ENCODE measurements at regions of chrX and their contacts with region 1.

Region 1: GRCh38 chrX:56248492-56248891 is 16.3 kb downstream of the KLF8 start:
- DNase-seq: peak in 1 of 2 experiments; percentile 72
- H3K4me3 ChIP-seq: no peak overlapping the region
- H3K27ac ChIP-seq: no peak overlapping the region
- H3K4me1 ChIP-seq: no peaks in the 10 kb centered on the region
- H3K27me3 ChIP-seq: no peaks in the 10 kb centered on the region
- CTCF ChIP-seq: peak; percentile 74

Region 2: GRCh38 chrX:55907968-55908607 is 340.4 kb before region 1 on chrX:
- CTCF ChIA-PET with region 1: no interaction called
- POLR2A ChIA-PET with region 1: no interaction called
- intact Hi-C with region 1: loop called (anchors 5 kb)
- DNase-seq: peak; percentile 72 to 78
- H3K4me3 ChIP-seq: peak overlapping the region; percentile 84
- H3K27ac ChIP-seq: peak overlapping the region; percentile 69
- H3K4me1 ChIP-seq: peaks cover 14% of the 10 kb centered on the region
- H3K27me3 ChIP-seq: no peaks in the 10 kb centered on the region
- CTCF ChIP-seq: peak; percentile 69

Region 3: DNA sequence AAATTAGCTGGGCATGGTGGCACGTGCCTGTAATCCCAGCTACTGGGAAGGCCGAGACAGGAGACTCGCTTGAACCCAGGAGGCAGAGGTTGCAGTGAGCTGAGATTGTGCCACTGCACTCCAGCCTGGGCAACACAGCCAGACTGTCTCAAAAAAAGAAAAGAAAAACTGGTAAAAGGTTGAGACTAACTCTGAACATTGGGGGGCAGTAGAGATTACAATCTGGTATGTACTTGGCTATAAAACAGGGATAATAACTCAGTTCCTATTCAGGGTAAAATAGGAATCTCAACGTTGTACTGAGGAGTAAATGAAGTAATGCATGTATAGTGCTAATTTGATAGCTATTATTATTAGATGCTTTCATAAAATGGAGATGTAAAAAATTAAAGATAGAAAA is 28.8 kb before region 1 on chrX:
- CTCF ChIA-PET with region 1: interaction called, 3 read pairs
- POLR2A ChIA-PET with region 1: no interaction called
- intact Hi-C with region 1: loop called (anchors 2 kb)
- DNase-seq: no peak
- H3K4me3 ChIP-seq: no peak overlapping the region
- H3K27ac ChIP-seq: no peak overlapping the region
- H3K4me1 ChIP-seq: no peaks in the 10 kb centered on the region
- H3K27me3 ChIP-seq: no peaks in the 10 kb centered on the region
- CTCF ChIP-seq: peak; percentile 47; the same call in 1 of the 2 replicates

Region 4: DNA sequence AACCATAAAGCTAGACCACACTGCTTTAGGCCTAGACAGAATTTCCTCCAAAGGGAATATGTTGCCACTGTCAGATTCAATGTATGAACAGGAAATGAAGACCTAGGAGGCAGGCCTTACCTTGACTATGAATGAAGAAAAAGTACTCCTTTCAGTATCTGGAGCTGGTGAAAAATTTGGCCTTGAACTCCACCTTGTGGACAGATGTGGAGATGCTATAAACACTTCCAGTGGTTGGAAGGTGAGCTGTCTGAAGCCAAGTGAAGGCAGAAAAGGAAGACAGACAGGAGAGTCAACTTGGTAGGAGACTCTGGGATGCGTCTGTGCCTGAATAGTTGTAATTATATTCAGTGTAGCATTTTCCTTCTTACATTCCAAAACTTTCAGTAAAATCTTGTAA is 729.7 kb after region 1 on chrX:
- CTCF ChIA-PET with region 1: interaction called, 3 read pairs
- POLR2A ChIA-PET with region 1: no interaction called
- intact Hi-C with region 1: loop called (anchors 1 kb)
- DNase-seq: peak in 1 of 2 experiments; percentile 62
- H3K4me3 ChIP-seq: no peak overlapping the region
- H3K27ac ChIP-seq: no peak overlapping the region
- H3K4me1 ChIP-seq: peaks cover 9% of the 10 kb centered on the region; the same call in 1 of the 2 replicates
- H3K27me3 ChIP-seq: no peaks in the 10 kb centered on the region
- CTCF ChIP-seq: peak; percentile 72

Region 5: DNA sequence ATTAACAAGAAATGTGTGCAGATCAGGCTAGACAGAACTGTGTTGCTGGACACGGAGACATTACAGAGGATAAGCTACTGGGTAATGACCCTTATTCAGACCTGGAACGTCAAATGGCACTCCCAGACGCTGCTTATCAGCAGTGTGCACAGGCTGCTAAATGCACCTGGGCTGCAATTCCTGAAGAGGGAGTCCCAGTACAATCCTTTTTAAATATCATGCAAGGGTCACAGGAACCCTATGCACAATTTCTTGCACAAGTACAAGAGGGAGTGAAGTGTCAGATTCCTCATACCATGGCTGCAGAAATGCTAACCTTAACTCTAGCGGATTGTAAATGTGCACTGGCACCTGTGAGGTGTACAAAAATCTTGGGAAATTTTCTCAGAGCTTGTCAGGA is 855.9 kb after region 1 on chrX:
- CTCF ChIA-PET with region 1: no interaction called
- POLR2A ChIA-PET with region 1: no interaction called
- intact Hi-C with region 1: loop called (anchors 10 kb)
- DNase-seq: no peak
- H3K4me3 ChIP-seq: no peak overlapping the region
- H3K27ac ChIP-seq: no peak overlapping the region
- H3K4me1 ChIP-seq: no peaks in the 10 kb centered on the region
- H3K27me3 ChIP-seq: no peaks in the 10 kb centered on the region
- CTCF ChIP-seq: no peak